ENCODE measurements at regions of chr15 and their contacts with region 1.

Region 1: GRCh38 chr15:51536965-51537574 is 85.5 kb downstream of the DMXL2 start:
- DNase-seq: peak in 1 of 2 experiments; percentile 4
- H3K4me3 ChIP-seq: no peak overlapping the region
- H3K27ac ChIP-seq: no peak overlapping the region
- H3K4me1 ChIP-seq: no peaks in the 10 kb centered on the region
- H3K27me3 ChIP-seq: no peaks in the 10 kb centered on the region
- CTCF ChIP-seq: peak; percentile 72

Region 2: DNA sequence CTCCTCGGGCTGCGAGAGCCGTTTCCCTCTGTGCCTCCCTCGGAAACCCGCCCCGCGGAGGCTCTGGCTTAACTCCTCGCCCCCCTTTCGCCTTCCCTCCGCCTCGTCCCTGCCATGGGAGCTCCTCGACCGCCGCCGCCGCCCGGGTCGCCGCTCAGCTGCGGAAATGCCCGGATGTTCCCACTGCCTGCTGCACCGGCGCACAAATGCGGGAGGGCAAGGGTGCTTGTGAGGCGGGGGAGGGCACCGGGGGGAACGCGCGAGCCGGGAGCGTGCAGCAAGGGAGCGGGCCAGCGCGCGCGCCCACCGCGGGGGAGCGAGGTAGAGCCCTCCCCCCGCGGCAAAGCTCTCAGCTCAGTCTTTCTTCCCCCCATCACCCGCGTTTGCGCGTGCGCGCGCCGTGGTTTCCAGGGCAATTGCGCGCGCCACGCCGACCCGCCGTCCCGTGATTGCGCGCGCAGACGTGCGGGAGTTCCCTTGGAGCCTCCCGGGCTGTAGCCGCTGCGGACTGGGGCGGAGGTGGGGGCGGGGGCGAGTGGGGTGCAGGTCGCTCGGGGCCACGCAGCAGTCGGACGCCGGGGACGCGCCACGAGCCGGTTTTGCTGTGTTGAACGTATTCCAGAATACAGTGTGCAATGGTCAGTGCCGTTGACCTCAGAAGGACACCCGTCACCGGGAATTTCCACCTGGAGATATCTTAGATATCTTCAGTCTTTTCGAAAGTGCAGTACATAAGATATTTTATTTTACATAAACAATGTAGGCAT is 85.7 kb after region 1 on chr15 and contains the start of gene DMXL2:
- CTCF ChIA-PET with region 1: interaction called, 16 read pairs
- POLR2A ChIA-PET with region 1: interaction called, 3 read pairs
- intact Hi-C with region 1: loop called (anchors 1 kb)
- DNase-seq: peak; percentile 43 to 86
- H3K4me3 ChIP-seq: peak within 1 kb of the TSS; percentile 72
- H3K27ac ChIP-seq: peak within 1 kb of the TSS; percentile 64
- H3K4me1 ChIP-seq: peaks cover 32% of the 10 kb centered on the region
- H3K27me3 ChIP-seq: no peaks in the 10 kb centered on the region
- CTCF ChIP-seq: no peak
- total RNA-seq, gene DMXL2: 25.5 and 29.8 TPM in 2 replicates

Region 3: DNA sequence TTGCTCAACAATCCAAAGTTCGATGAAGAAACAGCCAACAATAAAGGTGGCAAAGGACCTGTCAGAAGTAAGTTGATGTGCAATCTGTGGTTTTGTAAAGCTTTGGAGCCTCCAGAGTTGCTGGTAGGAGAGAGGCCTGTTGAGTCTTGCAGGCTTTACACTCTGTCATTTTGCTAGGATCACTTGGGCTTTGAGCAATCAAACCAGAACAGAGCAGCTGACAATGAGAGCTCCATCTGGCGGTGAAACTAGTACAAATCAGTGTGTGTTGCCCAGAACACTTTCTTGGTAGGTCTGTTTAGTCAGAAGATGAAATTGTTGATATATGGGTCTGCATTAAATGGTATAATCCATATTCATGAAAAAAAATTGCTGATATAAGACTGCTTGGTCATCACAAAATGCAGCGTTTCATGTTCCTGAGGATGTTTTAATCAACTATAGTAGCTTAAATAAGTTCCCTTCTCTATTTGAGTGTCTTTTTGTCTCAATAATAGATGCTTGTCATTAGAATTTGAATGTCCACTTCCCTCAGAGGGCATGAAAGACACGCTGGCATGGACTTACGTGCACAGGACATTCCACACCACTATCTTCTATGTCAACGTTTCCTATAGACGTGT is 240.0 kb after region 1 on chr15:
- CTCF ChIA-PET with region 1: no interaction called
- POLR2A ChIA-PET with region 1: no interaction called
- intact Hi-C with region 1: loop called (anchors 2 kb)
- DNase-seq: peak; percentile 57 to 61
- H3K4me3 ChIP-seq: no peak overlapping the region
- H3K27ac ChIP-seq: no peak overlapping the region
- H3K4me1 ChIP-seq: peaks cover 11% of the 10 kb centered on the region
- H3K27me3 ChIP-seq: no peaks in the 10 kb centered on the region
- CTCF ChIP-seq: peak; percentile 72

Region 4: GRCh38 chr15:51924156-51925068 is 387.3 kb after region 1 on chr15:
- CTCF ChIA-PET with region 1: no interaction called
- POLR2A ChIA-PET with region 1: no interaction called
- intact Hi-C with region 1: loop called (anchors 10 kb)
- DNase-seq: no peak
- H3K4me3 ChIP-seq: no peak overlapping the region
- H3K27ac ChIP-seq: no peak overlapping the region
- H3K4me1 ChIP-seq: no peaks in the 10 kb centered on the region
- H3K27me3 ChIP-seq: no peaks in the 10 kb centered on the region
- CTCF ChIP-seq: no peak

Measured in PC-9 (cell line).